IMR-90 (cell line): ENCODE measurements at regions of chr2 and their contacts with region 1.

Region 1: GRCh38 chr2:212974692-212975091 is 176.7 kb downstream of the IKZF2 start:
- DNase-seq: peak; percentile 85
- ATAC-seq: peak; percentile 74
- H3K4me3 ChIP-seq: no peak overlapping the region
- H3K27ac ChIP-seq: no peak overlapping the region
- H3K4me1 ChIP-seq: peaks cover 15% of the 10 kb centered on the region
- H3K27me3 ChIP-seq: no peaks in the 10 kb centered on the region
- CTCF ChIP-seq: no peak
- POLR2A ChIP-seq: no peak
- RAD21 ChIP-seq: no peak

Region 2: DNA sequence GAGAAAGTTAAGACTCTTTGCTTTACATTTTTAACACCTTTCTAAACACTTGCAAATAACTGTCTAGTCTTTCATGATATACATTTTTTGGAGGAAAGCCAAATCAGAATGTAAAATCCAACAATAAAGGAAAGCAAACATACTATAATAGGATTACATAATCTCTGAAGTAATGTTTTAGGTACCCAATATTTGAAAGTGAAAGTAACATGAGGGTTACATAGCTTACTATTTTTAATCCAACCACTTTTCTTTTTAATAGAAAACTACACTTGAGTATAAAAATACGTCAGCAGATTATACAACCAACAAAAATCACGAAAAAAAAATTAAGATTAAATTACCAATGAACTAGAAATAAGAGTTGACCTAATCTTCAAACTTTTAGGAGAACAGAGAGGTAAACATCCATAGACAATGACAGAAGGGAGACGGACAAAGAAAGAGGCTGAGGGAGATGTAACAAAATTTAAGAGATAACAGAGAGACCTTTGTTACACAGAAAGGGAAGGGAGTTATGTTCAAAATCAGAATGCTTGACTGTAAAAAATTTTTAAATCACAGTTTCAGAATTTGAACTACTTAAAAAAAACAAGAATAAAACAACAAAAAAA is 26.7 kb after region 1 on chr2:
- CTCF ChIA-PET with region 1: no interaction called
- POLR2A ChIA-PET with region 1: interaction called, 10 read pairs
- dilution Hi-C with region 1: no loop called
- in situ Hi-C with region 1: no loop called
- intact Hi-C with region 1: no loop called
- DNase-seq: no peak
- ATAC-seq: no peak
- H3K4me3 ChIP-seq: no peak overlapping the region
- H3K27ac ChIP-seq: no peak overlapping the region
- H3K4me1 ChIP-seq: peaks cover 3% of the 10 kb centered on the region; the same call in 1 of the 2 replicates
- H3K27me3 ChIP-seq: no peaks in the 10 kb centered on the region
- CTCF ChIP-seq: no peak
- POLR2A ChIP-seq: no peak
- RAD21 ChIP-seq: no peak